Cardiac septum (tissue), 1 donor: ENCODE measurements at regions of chr10 and their contacts with region 1.

Region 1: GRCh38 chr10:44101082-44101481 is 283.8 kb downstream of the CXCL12 start:
- DNase-seq: no peak

Region 2: DNA sequence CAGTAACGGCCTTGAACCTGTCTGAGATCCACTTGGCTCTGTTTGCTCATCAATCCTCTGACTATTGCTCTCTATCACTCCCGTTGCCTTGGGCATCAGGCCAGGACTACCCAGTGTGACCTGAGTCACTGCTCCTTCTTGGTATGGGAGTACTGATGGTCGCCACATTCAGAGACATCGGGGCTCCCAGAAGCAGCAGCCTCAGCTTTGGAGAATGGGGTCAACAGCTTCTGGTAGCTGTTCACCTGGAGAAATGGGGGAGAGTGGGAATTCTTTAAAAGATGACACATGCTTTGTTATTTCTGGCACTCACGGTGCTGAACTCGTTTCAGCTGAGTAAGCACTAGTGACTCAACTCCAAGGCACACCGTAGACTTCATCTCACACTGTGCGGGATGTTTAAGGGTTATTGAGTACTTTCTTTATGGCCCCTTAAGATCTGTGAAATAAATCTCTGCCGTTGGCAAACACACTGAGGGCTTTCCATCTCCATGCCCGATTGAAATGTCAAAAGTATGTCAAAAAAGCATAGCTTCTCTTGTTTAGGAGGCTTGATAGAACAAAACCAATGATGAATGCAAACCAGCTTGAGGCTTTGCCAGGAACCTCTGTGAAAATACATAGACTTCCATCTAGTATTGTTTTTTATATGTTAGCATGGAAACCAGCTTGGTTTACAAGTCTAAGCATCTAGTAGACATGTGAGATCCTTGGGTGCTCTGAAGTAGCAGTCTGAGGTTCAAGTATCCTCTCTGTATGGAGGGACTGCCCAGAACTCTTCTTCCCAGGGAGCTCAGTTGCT is 49.3 kb before region 1 on chr10:
- intact Hi-C with region 1: loop called (anchors 2 kb)
- DNase-seq: no peak

Region 3: DNA sequence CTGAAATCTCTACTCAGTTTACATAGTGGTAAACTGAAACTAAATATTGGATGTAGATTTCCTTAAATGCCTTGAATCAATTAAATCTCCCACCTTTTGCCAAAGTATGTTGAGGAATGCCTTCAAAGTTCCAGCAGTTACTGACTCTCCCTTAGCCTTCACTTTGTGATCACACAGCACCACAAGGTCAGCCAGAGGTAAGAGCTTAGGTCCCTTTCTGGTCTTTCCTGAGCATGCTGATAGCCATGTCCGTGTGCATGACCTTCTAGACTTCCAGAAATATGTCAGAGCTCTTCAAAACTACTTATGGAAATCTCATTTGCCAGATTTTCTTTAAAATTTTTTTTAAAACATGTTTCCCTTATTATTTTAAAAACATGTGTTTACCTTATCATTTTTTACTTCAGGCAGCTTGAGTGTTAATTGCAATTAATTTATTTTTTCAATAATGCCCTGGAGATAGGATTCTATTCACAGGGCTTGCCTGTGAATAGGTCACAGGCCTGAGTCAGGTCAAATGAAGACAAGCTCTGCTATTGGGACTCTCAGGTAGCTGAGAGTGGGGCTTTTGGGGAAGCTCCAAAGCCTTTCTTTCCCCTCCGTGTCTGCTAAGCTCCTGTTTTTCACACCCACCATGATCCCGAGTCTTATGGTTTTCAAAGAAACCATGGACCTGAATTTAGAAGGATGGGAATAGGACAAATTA is 63.3 kb after region 1 on chr10:
- intact Hi-C with region 1: no loop called
- DNase-seq: no peak